Panc1 (cell line): ENCODE measurements at regions of chr4 and their contacts with region 1.

Region 1: DNA sequence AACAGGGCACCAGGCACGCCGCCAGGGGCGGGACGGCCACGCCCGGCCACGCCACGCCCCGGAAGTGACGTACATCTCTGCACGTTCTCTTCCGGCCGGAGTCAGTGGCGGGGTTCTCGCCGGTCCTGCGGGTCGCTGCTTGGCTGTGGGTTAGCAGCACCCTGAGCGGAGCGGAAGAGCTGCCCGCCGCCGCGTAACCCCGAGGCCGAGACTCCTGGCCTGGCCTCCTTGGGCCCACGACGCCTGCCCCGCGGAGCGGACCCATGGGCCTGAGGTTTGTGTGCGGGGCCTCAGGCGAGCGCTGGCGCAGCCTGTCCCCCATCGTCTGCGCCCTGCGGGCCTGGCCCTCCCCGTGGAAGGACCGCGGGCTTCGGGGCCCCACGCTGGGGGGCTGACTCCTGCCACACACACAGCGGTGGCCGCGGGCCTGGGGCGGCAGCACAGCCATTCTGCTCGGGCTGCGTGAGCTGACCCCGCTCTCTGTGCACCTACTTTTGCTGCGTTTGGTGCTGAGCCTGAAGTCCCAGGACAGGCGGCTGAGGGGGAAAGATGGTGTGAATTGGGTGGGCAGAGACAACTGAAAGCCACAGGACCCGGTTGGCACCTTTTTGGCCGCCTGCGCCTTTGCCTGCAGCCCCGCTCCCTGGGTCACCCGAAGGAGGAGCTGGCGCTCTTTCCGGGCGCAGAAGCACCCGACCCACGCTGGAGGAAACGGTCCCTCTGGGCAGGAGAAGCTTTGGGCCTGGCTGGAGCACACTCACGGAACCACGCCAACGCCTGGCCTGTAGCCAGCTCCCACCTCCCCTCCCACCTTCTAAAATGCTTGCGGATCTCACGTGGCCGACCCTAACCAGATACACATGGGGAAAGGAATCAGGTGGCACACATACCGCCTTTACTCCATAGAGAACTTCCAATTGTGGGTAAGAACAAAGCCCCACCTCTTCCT is 28.1 kb downstream of the NOP14 start:
- DNase-seq: no peak
- ATAC-seq: peak; percentile 58
- H3K4me3 ChIP-seq: peak overlapping the region; percentile 64 to 82
- H3K27ac ChIP-seq: peak overlapping the region; percentile 89
- H3K4me1 ChIP-seq: peaks cover 38% of the 10 kb centered on the region
- H3K27me3 ChIP-seq: no peaks in the 10 kb centered on the region
- CTCF ChIP-seq: no peak

Region 2: DNA sequence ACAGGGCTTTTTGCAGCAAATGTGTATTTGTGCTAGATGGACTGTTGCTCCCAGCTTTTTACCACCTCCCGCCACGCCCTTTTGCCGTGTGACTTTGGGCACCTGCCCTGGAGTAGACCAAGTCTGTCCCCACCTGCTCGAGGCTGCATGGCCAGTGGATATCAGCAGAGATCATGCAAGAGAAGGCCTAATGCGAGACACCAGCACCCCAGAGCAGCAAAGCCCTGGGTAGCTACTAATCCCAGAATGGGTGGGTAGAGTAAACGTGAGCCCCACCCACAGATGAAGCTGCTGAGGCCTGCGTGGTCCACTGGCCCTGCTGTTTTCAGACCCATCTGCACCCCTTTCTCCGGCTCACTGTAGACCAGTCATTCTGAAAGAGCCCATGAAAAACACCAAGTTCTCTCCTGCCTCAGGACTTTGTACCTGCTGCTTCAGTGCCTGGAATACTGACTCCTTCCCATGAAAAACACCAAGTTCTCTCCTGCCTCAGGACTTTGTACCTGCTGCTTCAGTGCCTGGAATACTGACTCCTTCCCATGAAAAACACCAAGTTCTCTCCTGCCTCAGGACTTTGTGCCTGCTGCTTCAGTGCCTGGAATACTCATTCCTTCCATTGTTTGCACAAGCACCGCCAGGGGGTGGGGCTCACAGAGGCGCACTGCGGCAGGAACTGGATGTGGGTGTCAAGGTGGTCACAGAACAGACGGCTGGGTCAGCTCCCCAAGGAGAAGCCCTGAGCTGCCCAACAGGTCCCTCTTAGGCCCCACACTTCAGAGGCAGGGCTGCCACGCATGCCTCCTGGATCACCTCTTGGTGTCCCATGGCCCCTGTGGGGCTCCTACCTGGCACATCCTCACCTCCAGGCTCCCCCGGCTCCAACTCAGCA is 173.8 kb before region 1 on chr4:
- CTCF ChIA-PET with region 1: no interaction called
- POLR2A ChIA-PET with region 1: no interaction called
- in situ Hi-C with region 1: no loop called
- intact Hi-C with region 1: loop called (anchors 10 kb)
- DNase-seq: no peak
- ATAC-seq: 0 out of 2 replicates have a peak, but pooled peaks have one; percentile 15
- H3K4me3 ChIP-seq: no peak overlapping the region
- H3K27ac ChIP-seq: no peak overlapping the region
- H3K4me1 ChIP-seq: 0 out of 2 replicates have a peak, but pooled peaks cover 4% of the 10 kb centered on the region
- H3K27me3 ChIP-seq: no peaks in the 10 kb centered on the region
- CTCF ChIP-seq: no peak

Region 3: DNA sequence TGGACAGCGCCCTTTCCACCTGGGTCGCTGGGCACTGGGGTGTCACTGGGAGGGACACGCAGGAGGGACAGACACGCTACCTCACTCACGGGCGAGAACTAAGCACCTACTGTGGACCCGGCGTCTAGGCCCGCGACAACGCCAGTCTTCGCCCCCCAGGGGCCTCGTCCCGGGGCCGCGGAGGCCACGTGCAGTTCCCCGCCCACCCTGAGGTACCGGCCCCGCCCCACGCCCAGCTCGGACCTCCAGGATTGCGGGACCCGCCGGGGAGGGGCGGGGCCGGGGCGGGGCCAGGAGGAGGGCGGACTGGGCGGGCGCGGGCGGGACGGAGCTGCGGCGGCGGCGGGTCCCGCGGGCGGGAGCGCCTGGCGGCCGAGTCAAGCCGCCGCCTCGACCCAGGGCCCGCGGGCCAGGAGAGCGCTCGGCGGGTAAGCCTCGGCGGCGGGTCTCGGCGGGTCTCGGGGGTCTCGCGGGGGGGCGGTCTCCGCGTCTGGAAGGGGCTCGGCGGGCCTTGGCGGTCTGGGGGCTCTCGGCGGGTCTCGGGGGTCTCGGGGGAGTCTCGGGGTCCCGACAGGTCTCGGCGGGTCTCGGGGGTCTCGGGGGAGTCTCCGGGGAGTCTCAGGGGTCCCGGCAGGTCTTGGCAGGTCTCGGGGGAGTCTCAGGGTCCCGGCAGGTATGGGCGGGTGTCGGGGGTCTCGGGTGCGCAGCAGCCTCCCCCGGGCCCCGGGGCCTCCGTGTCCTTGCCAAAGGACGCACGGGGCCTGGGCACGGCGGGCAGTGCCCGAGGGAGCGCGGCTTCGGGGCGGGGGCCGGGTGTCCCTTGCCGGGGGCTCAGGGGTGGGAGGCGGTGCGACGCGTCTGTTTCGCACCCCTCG is 142.1 kb before region 1 on chr4 and contains the start of gene SH3BP2:
- CTCF ChIA-PET with region 1: no interaction called
- POLR2A ChIA-PET with region 1: no interaction called
- in situ Hi-C with region 1: no loop called
- intact Hi-C with region 1: loop called (anchors 10 kb)
- DNase-seq: no peak
- ATAC-seq: peak; percentile 50
- H3K4me3 ChIP-seq: peak within 1 kb of the TSS; percentile 54 to 77
- H3K27ac ChIP-seq: peak within 1 kb of the TSS; percentile 89
- H3K4me1 ChIP-seq: peaks cover 53% of the 10 kb centered on the region
- H3K27me3 ChIP-seq: no peaks in the 10 kb centered on the region
- CTCF ChIP-seq: no peak
- total RNA-seq, gene SH3BP2: 93.4 TPM